ENCODE measurements at regions of chr19 and their contacts with region 1.

Region 1: DNA sequence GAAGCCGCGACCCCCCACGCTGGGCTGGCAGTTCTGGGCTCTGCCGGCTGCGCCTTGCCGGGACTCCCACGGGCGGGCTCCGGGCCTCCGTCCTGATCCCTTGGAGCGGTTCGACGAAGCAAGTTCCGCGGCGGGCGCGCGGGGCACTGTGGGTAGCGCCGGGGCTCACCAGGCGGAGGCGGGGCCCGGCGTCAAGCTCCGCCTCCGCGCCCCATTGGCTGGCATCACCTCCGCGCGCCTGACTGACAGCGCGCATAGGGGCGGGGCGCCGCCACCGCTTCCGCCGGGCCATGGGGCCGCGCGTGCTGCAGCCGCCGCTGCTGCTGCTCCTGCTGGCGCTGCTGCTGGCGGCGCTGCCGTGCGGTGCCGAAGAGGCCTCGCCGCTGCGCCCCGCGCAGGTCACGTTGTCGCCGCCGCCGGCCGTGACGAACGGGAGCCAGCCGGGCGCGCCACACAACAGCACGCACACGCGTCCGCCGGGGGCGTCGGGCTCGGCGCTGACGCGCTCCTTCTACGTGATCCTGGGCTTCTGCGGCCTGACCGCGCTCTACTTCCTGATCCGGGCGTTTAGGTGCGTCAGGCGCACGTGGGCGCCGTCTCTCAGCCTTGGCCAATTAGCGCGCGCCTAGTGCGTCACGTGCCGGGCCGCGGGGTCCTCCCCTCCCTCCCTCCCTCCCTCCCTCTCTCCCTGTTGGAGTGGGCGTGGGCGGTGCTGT is at the start of gene FAM174C:
- DNase-seq: peak; percentile 90 to 97 (median 96)
- ATAC-seq: peak; percentile 90
- H3K4me3 ChIP-seq: peak within 1 kb of the TSS; percentile 75
- H3K4me3 Mint-ChIP-seq: peak within 1 kb of the TSS; percentile 79 to 93 (median 88)
- H3K27ac ChIP-seq: peak within 1 kb of the TSS; percentile 93
- H3K27ac Mint-ChIP-seq: peak within 1 kb of the TSS; percentile 62 to 98 (median 95)
- H3K4me1 ChIP-seq: peaks cover 46 to 60% of the 10 kb centered on the region in 2 donors
- H3K4me1 Mint-ChIP-seq: peaks cover 40 to 60% (median 48%) of the 10 kb centered on the region in 7 donors
- H3K27me3 ChIP-seq: no peaks in the 10 kb centered on the region
- H3K27me3 Mint-ChIP-seq: no peaks in the 10 kb centered on the region
- total RNA-seq, gene FAM174C: 31.7 to 57.3 (median 47.7) TPM

Region 2: GRCh38 chr19:1255547-1256227 is 19.7 kb before region 1 on chr19:
- CTCF ChIA-PET with region 1: no interaction called
- POLR2A ChIA-PET with region 1: interaction called, 22 read pairs
- intact Hi-C with region 1: loop called in 1 of 2 experiments (anchors 2 kb)
- DNase-seq: no peak
- ATAC-seq: no peak
- H3K4me3 ChIP-seq: no peak overlapping the region
- H3K4me3 Mint-ChIP-seq: no peak overlapping the region
- H3K27ac ChIP-seq: no peak overlapping the region
- H3K27ac Mint-ChIP-seq: no peak overlapping the region
- H3K4me1 ChIP-seq: peaks cover 47 to 65% of the 10 kb centered on the region in 2 donors
- H3K4me1 Mint-ChIP-seq: peaks cover 16 to 51% (median 42%) of the 10 kb centered on the region in 7 donors
- H3K27me3 ChIP-seq: no peaks in the 10 kb centered on the region
- H3K27me3 Mint-ChIP-seq: no peaks in the 10 kb centered on the region

Region 3: GRCh38 chr19:1373534-1374249 is 98.3 kb after region 1 on chr19:
- CTCF ChIA-PET with region 1: interaction called, 4 read pairs
- POLR2A ChIA-PET with region 1: interaction called, 3 read pairs
- intact Hi-C with region 1: loop called (anchors 1 kb)
- DNase-seq: no peak
- ATAC-seq: no peak
- H3K4me3 ChIP-seq: no peak overlapping the region
- H3K4me3 Mint-ChIP-seq: no peak overlapping the region
- H3K27ac ChIP-seq: no peak overlapping the region
- H3K27ac Mint-ChIP-seq: no peak overlapping the region
- H3K4me1 ChIP-seq: no peaks in the 10 kb centered on the region
- H3K4me1 Mint-ChIP-seq: peaks cover 0 to 4% (median 0%) of the 10 kb centered on the region in 7 donors
- H3K27me3 ChIP-seq: no peaks in the 10 kb centered on the region
- H3K27me3 Mint-ChIP-seq: no peaks in the 10 kb centered on the region

Region 4: GRCh38 chr19:1438035-1438932 is 162.9 kb after region 1 on chr19 and contains the start of gene RPS15:
- CTCF ChIA-PET with region 1: no interaction called
- POLR2A ChIA-PET with region 1: interaction called, 4 read pairs
- intact Hi-C with region 1: loop called (anchors 1 kb)
- DNase-seq: peak; percentile 92 to 98 (median 96)
- ATAC-seq: peak; percentile 97
- H3K4me3 ChIP-seq: peak within 1 kb of the TSS; percentile 82
- H3K4me3 Mint-ChIP-seq: peak within 1 kb of the TSS; percentile 87 to 99 (median 98)
- H3K27ac ChIP-seq: peak within 1 kb of the TSS; percentile 92
- H3K27ac Mint-ChIP-seq: peak within 1 kb of the TSS; percentile 96 to 100 (median 99)
- H3K4me1 ChIP-seq: peaks cover 8 to 11% of the 10 kb centered on the region in 2 donors
- H3K4me1 Mint-ChIP-seq: peaks cover 9 to 34% (median 15%) of the 10 kb centered on the region in 7 donors
- H3K27me3 ChIP-seq: no peaks in the 10 kb centered on the region
- H3K27me3 Mint-ChIP-seq: no peaks in the 10 kb centered on the region
- total RNA-seq, gene RPS15: 1,300 to 2,097 (median 2,012) TPM

Region 5: GRCh38 chr19:1592755-1593500 is 317.5 kb after region 1 on chr19 and contains the start of gene MBD3:
- CTCF ChIA-PET with region 1: no interaction called
- POLR2A ChIA-PET with region 1: no interaction called
- intact Hi-C with region 1: loop called in 1 of 2 experiments (anchors 5 kb)
- DNase-seq: peak; percentile 81 to 92 (median 88)
- ATAC-seq: peak; percentile 92
- H3K4me3 ChIP-seq: peak within 1 kb of the TSS; percentile 86
- H3K4me3 Mint-ChIP-seq: peak within 1 kb of the TSS; percentile 84 to 92 (median 90)
- H3K27ac ChIP-seq: peak within 1 kb of the TSS; percentile 99
- H3K27ac Mint-ChIP-seq: peak within 1 kb of the TSS; percentile 79 to 95 (median 91)
- H3K4me1 ChIP-seq: peaks cover 10 to 16% of the 10 kb centered on the region in 2 donors
- H3K4me1 Mint-ChIP-seq: peaks cover 8 to 22% (median 15%) of the 10 kb centered on the region in 7 donors
- H3K27me3 ChIP-seq: no peaks in the 10 kb centered on the region
- H3K27me3 Mint-ChIP-seq: no peaks in the 10 kb centered on the region
- total RNA-seq, gene MBD3: 50.1 to 87.8 (median 64.6) TPM

Measured in naive thymus-derived CD4-positive, alpha-beta T cell (primary cell).